Activated CD4-positive, alpha-beta T cell treated with anti-CD3 and anti-CD28 coated beads, Interleukin-2, amount 10 ng/mL, durations not matched to agents 7 days and 5 days (primary cell): ENCODE measurements at regions of chr2 and their contacts with region 1.

Region 1: GRCh38 chr2:97697252-97698235 is 15.8 kb upstream of the ZAP70 start:
- DNase-seq: peak; percentile 94
- H3K4me3 Mint-ChIP-seq: no peak overlapping the region
- H3K27ac Mint-ChIP-seq: no peak overlapping the region
- H3K4me1 Mint-ChIP-seq: peaks cover 13% of the 10 kb centered on the region
- H3K27me3 Mint-ChIP-seq: peaks cover 6% of the 10 kb centered on the region

Region 2: GRCh38 chr2:97718051-97718882 is 20.7 kb after region 1 on chr2:
- CTCF ChIA-PET with region 1: interaction called, 101 read pairs
- POLR2A ChIA-PET with region 1: no interaction called
- DNase-seq: peak; percentile 86
- H3K4me3 Mint-ChIP-seq: peak overlapping the region; percentile 95
- H3K27ac Mint-ChIP-seq: peak overlapping the region; percentile 92
- H3K4me1 Mint-ChIP-seq: peaks cover 77% of the 10 kb centered on the region
- H3K27me3 Mint-ChIP-seq: no peaks in the 10 kb centered on the region

Region 3: GRCh38 chr2:97988722-97989121 is 291.2 kb after region 1 on chr2:
- CTCF ChIA-PET with region 1: no interaction called
- POLR2A ChIA-PET with region 1: no interaction called
- DNase-seq: no peak
- H3K4me3 Mint-ChIP-seq: no peak overlapping the region
- H3K27ac Mint-ChIP-seq: no peak overlapping the region
- H3K4me1 Mint-ChIP-seq: peaks cover 23% of the 10 kb centered on the region
- H3K27me3 Mint-ChIP-seq: no peaks in the 10 kb centered on the region

Region 4: DNA sequence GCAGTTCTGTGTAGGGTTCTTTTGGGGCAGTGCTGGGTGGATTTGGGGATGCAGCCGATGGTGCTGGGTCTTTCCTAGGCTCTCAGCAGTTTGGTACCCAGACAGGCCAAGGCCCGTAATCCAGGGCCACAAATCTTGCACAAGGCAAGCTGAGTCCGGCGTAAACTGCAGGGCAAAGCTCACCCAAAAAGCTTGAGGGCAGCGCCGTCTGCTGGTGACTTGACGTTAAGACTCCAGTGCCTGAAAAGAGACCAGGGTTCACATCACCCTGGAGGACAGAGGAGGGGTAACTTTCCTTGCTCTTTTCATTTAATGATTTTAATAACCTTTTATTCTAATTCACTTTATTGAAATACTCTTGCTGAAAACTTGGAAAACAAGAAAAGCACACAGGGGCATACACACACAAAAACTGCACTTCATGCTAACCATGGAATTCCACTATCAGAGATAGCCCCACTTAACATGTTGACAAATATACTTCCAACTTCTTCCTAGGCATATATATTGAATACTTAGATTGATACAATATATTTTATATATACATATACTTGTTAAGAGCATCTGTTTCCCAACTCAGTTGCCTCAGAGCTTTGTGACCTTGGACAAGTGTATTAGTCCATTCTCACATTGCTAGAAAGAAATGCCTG is 687.6 kb after region 1 on chr2:
- CTCF ChIA-PET with region 1: interaction called, 14 read pairs
- POLR2A ChIA-PET with region 1: no interaction called
- DNase-seq: peak; percentile 78
- H3K4me3 Mint-ChIP-seq: no peak overlapping the region
- H3K27ac Mint-ChIP-seq: no peak overlapping the region
- H3K4me1 Mint-ChIP-seq: no peaks in the 10 kb centered on the region
- H3K27me3 Mint-ChIP-seq: peaks cover 1% of the 10 kb centered on the region